ENCODE measurements at regions of chr5 and their contacts with region 1.

Region 1: DNA sequence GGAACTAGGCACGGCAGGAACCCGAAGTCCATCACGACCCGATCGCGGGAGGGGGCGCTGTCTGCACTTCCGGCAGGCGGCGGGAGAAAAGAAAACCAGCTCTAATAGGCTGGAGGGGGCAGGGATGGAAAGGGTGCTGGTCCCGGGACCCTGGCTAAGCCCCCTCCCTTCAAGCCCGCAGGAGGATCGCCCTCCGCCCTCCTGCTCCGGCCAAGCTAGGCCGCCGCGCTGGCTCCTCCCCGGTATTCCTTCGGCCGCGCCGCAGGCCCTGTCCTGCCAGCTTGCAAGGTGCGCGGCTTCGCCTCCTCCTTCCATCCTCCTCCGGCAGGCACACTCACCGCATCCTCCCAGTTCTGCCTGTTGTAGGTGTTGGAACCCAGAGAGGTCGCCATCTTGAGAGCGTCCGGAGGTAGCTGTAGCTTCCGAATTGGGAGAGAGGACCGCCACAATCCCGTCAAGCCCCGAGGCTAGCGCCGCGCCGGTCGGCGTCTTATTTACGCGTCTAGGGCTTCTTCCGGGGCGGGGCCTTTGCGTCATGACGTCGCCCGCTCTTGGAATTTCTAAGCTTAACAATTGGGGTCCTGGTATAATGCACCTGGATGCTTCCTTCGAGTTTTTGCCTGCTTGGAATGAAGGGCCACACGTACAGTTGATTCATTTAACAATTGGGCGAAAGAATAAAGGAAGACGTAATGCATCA is at the start of gene RBM22:
- DNase-seq: peak; percentile 90

Region 2: GRCh38 chr5:150112261-150113046 is 588.3 kb before region 1 on chr5:
- CTCF ChIA-PET with region 1: no interaction called
- POLR2A ChIA-PET with region 1: no interaction called
- DNase-seq: no peak

Region 3: DNA sequence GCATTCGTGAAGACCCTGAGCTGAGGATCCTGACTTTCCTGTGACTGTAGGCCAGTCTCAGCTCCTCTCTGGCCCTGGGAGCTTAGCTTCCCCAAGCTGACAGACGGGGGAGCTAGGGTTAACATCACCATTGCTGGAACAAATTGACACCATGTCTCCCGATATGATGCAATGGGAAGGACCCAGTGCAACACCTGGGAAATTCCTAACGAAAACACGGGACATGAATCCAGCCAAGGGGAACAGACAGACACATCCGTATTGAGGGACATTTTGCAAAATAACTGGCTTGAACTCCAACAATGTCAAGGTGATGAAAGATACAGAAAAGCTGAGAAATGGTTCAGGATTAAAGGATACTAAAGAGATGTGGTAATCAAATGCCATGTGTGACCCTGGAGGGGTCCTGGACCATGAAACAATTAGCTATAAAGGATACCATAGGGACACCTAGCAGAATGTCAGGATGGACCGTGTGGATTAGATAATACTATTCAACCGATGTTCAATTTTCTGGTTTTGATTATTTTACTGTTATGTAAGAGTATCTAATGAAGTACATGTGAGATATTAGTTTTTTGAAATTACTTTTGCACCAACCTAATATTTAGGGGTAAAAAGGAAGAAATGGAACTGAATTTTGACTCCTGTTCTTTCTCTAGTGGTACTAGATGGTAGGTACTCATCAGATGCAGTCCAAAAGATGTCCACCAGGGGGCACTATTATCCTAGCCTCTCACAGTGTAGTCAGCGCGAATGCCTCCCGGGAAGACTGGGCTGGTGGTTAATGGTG is 140.1 kb before region 1 on chr5:
- CTCF ChIA-PET with region 1: interaction called, 28 read pairs
- POLR2A ChIA-PET with region 1: interaction called, 20 read pairs
- DNase-seq: peak; percentile 84

Region 4: DNA sequence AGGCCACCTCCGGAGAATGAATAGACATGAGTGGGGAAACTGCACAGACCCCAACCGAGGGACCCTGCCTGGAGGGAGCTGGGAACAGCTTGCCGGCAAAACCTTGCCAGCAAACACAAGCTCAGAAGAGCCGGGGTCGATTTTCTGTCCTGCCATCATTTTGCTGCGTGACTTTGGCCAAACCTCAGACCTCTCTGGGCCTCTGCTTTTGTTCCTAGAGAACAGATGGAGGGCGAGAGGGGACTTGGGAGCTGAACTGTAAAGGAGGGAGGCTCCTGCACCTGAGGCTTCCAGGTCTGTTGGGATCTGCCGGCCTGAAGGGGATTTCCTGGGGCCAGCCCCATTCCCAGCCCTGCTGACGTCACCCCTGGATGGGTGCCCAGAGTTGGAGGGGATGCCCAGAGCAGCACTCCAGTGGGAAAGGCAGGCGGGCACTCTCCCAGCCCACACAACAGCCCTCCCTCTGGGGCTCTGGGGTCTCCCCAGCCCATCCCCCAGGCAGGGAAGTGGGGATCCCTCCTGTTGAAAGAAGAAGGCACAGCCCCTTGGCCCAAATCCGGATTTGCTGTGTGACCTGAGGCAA is 100.7 kb before region 1 on chr5:
- CTCF ChIA-PET with region 1: no interaction called
- POLR2A ChIA-PET with region 1: no interaction called
- DNase-seq: no peak

Region 5: DNA sequence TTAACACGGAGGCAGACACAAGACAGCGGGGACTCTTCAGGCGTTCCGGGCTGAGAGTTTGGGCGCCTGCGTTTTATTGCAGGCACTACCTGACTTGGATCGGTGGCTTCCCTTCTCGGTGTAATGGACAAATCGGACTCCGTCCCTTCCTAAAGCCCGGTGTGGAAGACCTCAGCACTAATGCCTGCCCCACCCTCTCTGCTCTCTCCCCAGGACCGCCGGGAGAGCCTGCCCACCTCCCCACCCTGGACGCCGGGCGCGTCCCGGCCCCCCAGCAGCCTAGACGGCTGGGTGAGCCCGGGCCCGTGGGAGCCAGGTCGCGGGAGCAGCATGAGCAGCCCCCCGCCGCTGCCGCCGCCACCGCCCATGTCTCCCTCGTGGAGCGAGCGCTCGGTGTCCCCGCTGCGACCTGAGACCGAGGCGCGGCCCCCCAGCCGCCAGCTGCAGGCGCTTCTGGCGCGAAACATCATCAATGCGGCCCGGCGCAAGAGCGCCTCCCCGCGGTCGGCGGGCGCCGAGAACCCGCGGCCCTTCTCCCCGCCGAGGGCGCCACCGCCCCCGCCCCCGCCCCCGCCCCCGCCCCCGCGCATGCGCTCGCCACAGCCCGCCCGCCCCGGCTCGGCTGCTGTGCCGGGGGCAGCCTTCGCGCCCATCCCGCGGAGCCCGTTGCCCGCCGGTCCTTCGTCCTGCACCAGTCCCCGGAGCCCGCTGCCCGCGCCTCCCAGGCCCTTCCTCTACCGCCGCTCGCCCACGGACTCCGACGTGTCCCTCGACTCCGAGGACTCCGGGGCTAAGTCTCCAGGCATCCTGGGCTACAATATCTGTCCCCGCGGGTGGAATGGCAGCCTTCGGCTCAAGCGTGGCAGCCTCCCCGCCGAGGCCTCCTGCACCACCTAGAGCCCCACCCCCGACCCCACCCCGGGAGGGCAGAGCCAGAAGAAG is 44.3 kb before region 1 on chr5:
- CTCF ChIA-PET with region 1: interaction called, 5 read pairs
- POLR2A ChIA-PET with region 1: interaction called, 43 read pairs
- DNase-seq: peak; percentile 98

Region 6: GRCh38 chr5:150674341-150674821 is 26.4 kb before region 1 on chr5:
- CTCF ChIA-PET with region 1: no interaction called
- POLR2A ChIA-PET with region 1: interaction called, 10 read pairs
- DNase-seq: no peak

Region 7: DNA sequence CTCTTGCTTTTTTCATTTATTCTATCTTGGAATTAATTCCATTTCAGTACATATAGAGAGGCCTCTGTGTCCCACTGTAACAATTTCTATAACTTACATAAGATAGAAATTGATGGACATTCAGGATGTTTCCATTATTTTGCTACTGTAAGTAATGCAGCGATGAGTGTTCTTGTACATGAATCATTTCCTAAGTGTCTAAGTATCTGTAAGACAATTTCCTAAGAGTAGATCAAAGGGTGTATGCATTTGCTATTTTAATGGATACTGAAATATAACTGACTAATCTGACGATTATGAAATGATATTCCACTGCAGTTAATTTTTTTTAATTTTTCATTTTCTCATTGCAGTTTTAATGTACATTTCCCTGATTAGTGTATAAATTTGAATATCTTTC is 23.1 kb after region 1 on chr5:
- CTCF ChIA-PET with region 1: no interaction called
- POLR2A ChIA-PET with region 1: interaction called, 11 read pairs
- DNase-seq: no peak

Region 8: GRCh38 chr5:150778517-150779396 is 78.0 kb after region 1 on chr5 and contains the start of gene SMIM3:
- CTCF ChIA-PET with region 1: interaction called, 4 read pairs
- POLR2A ChIA-PET with region 1: interaction called, 25 read pairs
- DNase-seq: peak; percentile 74

Measured in HEK293T (cell line).